Aorta (tissue), 5 donors: ENCODE measurements at regions of chr3 and their contacts with region 1.

Region 1: GRCh38 chr3:71583566-71584449 is at the start of gene FOXP1:
- DNase-seq: peak; percentile 85 to 90
- ATAC-seq: peak; percentile 73
- H3K4me3 ChIP-seq: peak within 1 kb of the TSS; percentile 67 to 82
- H3K27ac ChIP-seq: peak within 1 kb of the TSS; percentile 97 to 99
- H3K4me1 ChIP-seq: no peaks in the 10 kb centered on the region
- H3K27me3 ChIP-seq: no peaks in the 10 kb centered on the region
- total RNA-seq, gene FOXP1: 187 to 263 TPM

Region 2: DNA sequence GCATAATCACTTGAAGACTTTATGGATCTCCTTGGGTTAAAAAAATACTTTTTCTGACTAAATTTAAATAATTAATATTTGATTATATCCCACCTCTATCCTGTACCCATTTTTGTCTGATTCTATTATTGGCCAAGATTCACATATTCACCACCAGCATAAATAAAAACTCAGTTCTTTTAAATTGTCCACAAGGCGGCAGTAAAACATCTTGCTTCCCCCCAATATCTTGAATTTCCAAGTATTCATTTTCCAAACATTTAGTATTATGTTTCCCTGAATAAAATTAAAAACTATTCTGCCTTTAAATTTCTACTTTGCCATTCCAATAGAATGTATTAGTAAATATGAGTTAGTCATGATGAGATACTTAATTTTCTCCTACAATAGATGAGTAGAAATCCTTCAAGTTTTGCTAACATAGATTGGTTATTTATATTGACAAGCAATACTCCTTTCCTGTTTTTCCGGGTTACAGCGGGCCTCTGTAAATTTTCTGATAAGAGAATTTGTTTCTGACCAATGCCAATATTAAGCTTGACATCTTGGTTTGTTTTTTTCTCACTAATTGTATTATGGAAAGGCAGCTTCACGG is 1052.6 kb before region 1 on chr3:
- intact Hi-C with region 1: loop called in 1 of 2 experiments (anchors 10 kb)
- DNase-seq: no peak
- ATAC-seq: no peak
- H3K4me3 ChIP-seq: no peak overlapping the region
- H3K27ac ChIP-seq: no peak overlapping the region
- H3K4me1 ChIP-seq: peaks cover 0 to 2% of the 10 kb centered on the region in 2 donors
- H3K27me3 ChIP-seq: no peaks in the 10 kb centered on the region

Region 3: GRCh38 chr3:70933105-70933810 is 650.5 kb before region 1 on chr3:
- intact Hi-C with region 1: no loop called
- DNase-seq: no peak
- ATAC-seq: no peak
- H3K4me3 ChIP-seq: no peak overlapping the region
- H3K27ac ChIP-seq: no peak overlapping the region
- H3K4me1 ChIP-seq: peaks cover 0 to 2% of the 10 kb centered on the region in 2 donors
- H3K27me3 ChIP-seq: no peaks in the 10 kb centered on the region

Region 4: GRCh38 chr3:70973558-70973957 is 610.2 kb before region 1 on chr3:
- intact Hi-C with region 1: loop called in 1 of 2 experiments (anchors 10 kb)
- DNase-seq: no peak
- ATAC-seq: no peak
- H3K4me3 ChIP-seq: no peak overlapping the region
- H3K27ac ChIP-seq: no peak overlapping the region
- H3K4me1 ChIP-seq: peaks cover 0 to 5% of the 10 kb centered on the region in 2 donors
- H3K27me3 ChIP-seq: no peaks in the 10 kb centered on the region

Region 5: DNA sequence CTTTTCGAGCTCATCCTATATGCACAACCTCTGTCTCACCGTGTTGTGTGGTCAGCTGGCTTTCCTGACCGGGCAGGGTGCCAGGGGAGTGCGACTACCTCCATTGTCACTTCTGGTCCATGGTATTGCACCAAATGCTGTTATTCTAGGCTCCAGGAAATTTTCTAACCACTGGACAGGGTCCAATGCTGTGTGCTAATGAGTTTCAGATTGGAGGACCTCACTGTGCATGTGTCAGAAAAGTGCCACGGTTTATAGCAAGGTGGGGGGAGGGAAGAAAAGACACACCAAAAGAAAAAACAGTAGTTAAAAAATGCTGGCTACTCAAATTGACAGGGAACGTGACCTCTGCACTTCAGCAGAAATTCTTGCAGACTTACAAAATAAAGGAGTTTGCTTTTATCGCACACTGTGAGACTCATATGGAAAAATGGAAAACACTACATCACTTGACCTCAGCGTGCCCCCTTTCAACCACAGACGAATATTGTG is 480.3 kb before region 1 on chr3:
- intact Hi-C with region 1: loop called (anchors 10 kb)
- DNase-seq: peak; percentile 68 to 85
- ATAC-seq: no peak
- H3K4me3 ChIP-seq: no peak overlapping the region
- H3K27ac ChIP-seq: peak overlapping the region in 1 of 2 donors; percentile 91
- H3K4me1 ChIP-seq: peaks cover 17 to 26% of the 10 kb centered on the region in 2 donors
- H3K27me3 ChIP-seq: no peaks in the 10 kb centered on the region

Region 6: GRCh38 chr3:71247221-71247976 is 336.4 kb before region 1 on chr3:
- intact Hi-C with region 1: loop called (anchors 2 to 5 kb)
- DNase-seq: no peak
- ATAC-seq: no peak
- H3K4me3 ChIP-seq: no peak overlapping the region
- H3K27ac ChIP-seq: peak overlapping the region in 1 of 2 donors; percentile 42
- H3K4me1 ChIP-seq: peaks cover 0 to 2% of the 10 kb centered on the region in 2 donors
- H3K27me3 ChIP-seq: no peaks in the 10 kb centered on the region

Region 7: DNA sequence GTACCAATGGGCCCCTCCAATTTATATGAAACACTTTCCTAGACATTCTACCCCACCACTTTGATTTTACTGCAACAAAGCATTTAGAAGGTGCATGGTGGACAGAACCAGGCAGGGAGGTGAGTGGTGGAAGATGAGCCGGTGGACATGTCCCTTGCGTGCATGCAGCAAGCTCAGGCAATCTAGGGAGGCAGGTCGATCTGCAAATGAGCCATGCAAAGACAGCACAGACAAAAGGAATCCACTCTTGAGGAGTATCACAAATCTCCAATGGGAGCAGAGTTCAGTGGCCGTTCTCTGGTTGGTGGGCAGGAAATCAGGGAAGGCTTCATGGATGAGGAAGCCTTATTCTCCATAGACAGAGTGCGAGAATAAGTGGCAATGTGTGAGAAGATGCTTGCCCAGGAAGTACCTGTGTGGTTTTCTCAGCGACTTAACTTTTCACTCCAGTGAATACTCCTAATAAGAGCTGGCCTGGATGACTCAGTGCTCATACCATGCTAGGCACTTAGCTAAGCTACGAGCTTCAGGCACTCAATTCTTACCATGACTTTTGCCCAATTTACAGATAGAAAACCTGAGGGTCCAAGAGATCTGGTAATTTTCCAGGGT is 152.8 kb before region 1 on chr3:
- intact Hi-C with region 1: loop called in 1 of 2 experiments (anchors 5 kb)
- DNase-seq: no peak
- ATAC-seq: no peak
- H3K4me3 ChIP-seq: no peak overlapping the region
- H3K27ac ChIP-seq: no peak overlapping the region
- H3K4me1 ChIP-seq: peaks cover 0 to 5% of the 10 kb centered on the region in 2 donors
- H3K27me3 ChIP-seq: no peaks in the 10 kb centered on the region

Region 8: GRCh38 chr3:71466483-71466882 is 117.3 kb before region 1 on chr3:
- intact Hi-C with region 1: no loop called
- DNase-seq: no peak
- ATAC-seq: no peak
- H3K4me3 ChIP-seq: no peak overlapping the region
- H3K27ac ChIP-seq: no peak overlapping the region
- H3K4me1 ChIP-seq: no peaks in the 10 kb centered on the region
- H3K27me3 ChIP-seq: no peaks in the 10 kb centered on the region

Region 9: GRCh38 chr3:71520161-71521020 is 63.4 kb before region 1 on chr3:
- intact Hi-C with region 1: no loop called
- DNase-seq: no peak
- ATAC-seq: no peak
- H3K4me3 ChIP-seq: no peak overlapping the region
- H3K27ac ChIP-seq: no peak overlapping the region
- H3K4me1 ChIP-seq: peaks cover 5 to 15% of the 10 kb centered on the region in 2 donors
- H3K27me3 ChIP-seq: no peaks in the 10 kb centered on the region

Region 10: DNA sequence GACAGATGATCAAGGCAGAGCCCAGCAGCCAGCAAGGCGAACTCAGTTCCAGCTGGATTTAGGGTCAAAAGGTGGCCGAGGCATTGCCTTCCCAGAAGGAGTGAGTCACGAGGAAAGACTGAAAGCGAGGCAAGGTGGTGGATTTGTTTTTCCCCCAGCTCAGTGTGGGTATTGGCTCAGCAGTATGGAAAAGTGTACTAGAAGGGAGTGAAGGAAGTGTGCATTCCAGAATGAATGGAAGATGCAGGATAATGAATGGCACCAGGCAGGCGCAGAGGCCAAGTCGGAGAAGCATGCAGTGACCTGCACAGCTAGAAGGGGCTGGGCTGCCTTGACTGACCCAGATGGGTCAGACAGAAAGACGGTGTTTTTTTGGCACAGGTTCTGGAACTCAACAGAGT is 46.6 kb before region 1 on chr3:
- intact Hi-C with region 1: loop called (anchors 1 to 5 kb)
- DNase-seq: peak; percentile 87 to 90
- ATAC-seq: peak; percentile 87
- H3K4me3 ChIP-seq: no peak overlapping the region
- H3K27ac ChIP-seq: peak overlapping the region; percentile 47 to 86
- H3K4me1 ChIP-seq: peaks cover 7 to 14% of the 10 kb centered on the region in 2 donors
- H3K27me3 ChIP-seq: no peaks in the 10 kb centered on the region

Region 11: GRCh38 chr3:71805199-71805598 is 221.4 kb after region 1 on chr3:
- intact Hi-C with region 1: no loop called
- DNase-seq: no peak
- ATAC-seq: no peak
- H3K4me3 ChIP-seq: no peak overlapping the region
- H3K27ac ChIP-seq: no peak overlapping the region
- H3K4me1 ChIP-seq: no peaks in the 10 kb centered on the region
- H3K27me3 ChIP-seq: no peaks in the 10 kb centered on the region